ENCODE measurements at regions of chr3 and their contacts with region 1.

Region 1: DNA sequence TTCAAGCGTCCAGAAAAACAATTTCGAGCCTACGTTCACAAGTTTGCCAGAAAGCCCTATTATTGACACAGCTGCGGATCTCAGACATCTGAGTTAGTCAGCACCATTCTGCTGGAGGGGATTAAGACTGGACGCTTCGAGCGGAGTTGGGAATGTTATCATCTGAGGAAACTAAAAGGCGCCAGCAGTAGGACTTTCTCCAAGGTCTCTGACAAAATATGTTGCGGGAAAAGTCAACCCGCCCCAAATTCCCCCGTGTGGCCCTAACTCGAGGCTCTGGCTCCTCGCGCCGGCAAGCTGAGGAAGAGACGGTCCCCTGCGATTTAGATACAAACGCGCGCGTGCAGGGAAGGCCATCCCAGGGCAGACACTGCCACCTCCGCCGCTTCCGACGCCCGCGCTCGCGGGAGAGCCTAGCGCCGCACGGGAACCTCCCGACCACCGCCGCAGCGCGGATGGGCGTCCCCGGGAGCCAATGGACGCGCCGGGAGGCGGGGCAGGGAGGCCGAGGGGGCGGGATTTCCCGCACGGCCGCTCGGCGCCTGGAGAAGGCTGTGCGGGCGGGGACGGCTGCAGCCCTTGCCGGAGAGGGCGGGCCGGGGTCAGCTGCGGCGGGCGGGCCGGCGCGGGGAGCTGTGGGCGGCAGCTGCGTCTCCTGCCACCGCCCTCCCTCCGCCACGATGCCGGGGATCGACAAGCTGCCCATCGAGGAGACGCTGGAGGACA is at the start of gene APPL1:
- DNase-seq: peak; percentile 95
- ATAC-seq: peak; percentile 97
- H3K4me3 Mint-ChIP-seq: peak within 1 kb of the TSS; percentile 94
- H3K27ac Mint-ChIP-seq: peak within 1 kb of the TSS; percentile 87
- H3K4me1 Mint-ChIP-seq: peaks cover 45% of the 10 kb centered on the region
- H3K27me3 Mint-ChIP-seq: no peaks in the 10 kb centered on the region
- CTCF ChIP-seq: no peak
- total RNA-seq, gene APPL1: 58.3 and 62.0 TPM in 2 replicates

Region 2: GRCh38 chr3:56556908-56557830 is 670.2 kb before region 1 on chr3 and contains the start of gene CCDC66:
- CTCF ChIA-PET with region 1: no interaction called
- POLR2A ChIA-PET with region 1: interaction called, 3 read pairs
- intact Hi-C with region 1: loop called (anchors 5 kb)
- DNase-seq: peak; percentile 84
- ATAC-seq: peak; percentile 98
- H3K4me3 Mint-ChIP-seq: peak within 1 kb of the TSS; percentile 98
- H3K27ac Mint-ChIP-seq: peak within 1 kb of the TSS; percentile 97
- H3K4me1 Mint-ChIP-seq: peaks cover 20% of the 10 kb centered on the region
- H3K27me3 Mint-ChIP-seq: no peaks in the 10 kb centered on the region
- CTCF ChIP-seq: no peak
- total RNA-seq, gene CCDC66: 29.1 and 34.9 TPM in 2 replicates

Region 3: GRCh38 chr3:56997675-56998074 is 229.7 kb before region 1 on chr3:
- CTCF ChIA-PET with region 1: interaction called, 3 read pairs
- POLR2A ChIA-PET with region 1: no interaction called
- intact Hi-C with region 1: loop called (anchors 5 kb)
- DNase-seq: no peak
- ATAC-seq: no peak
- H3K4me3 Mint-ChIP-seq: no peak overlapping the region
- H3K27ac Mint-ChIP-seq: no peak overlapping the region
- H3K4me1 Mint-ChIP-seq: peaks cover 6% of the 10 kb centered on the region
- H3K27me3 Mint-ChIP-seq: peaks cover 3% of the 10 kb centered on the region
- CTCF ChIP-seq: no peak

Region 4: GRCh38 chr3:57169872-57170623 is 57.3 kb before region 1 on chr3:
- CTCF ChIA-PET with region 1: interaction called, 6 read pairs
- POLR2A ChIA-PET with region 1: no interaction called
- intact Hi-C with region 1: loop called (anchors 5 kb)
- DNase-seq: peak; percentile 67
- ATAC-seq: peak; percentile 66
- H3K4me3 Mint-ChIP-seq: peak overlapping the region; percentile 74
- H3K27ac Mint-ChIP-seq: no peak overlapping the region
- H3K4me1 Mint-ChIP-seq: peaks cover 11% of the 10 kb centered on the region
- H3K27me3 Mint-ChIP-seq: peaks cover 28% of the 10 kb centered on the region
- CTCF ChIP-seq: peak; percentile 81

Region 5: DNA sequence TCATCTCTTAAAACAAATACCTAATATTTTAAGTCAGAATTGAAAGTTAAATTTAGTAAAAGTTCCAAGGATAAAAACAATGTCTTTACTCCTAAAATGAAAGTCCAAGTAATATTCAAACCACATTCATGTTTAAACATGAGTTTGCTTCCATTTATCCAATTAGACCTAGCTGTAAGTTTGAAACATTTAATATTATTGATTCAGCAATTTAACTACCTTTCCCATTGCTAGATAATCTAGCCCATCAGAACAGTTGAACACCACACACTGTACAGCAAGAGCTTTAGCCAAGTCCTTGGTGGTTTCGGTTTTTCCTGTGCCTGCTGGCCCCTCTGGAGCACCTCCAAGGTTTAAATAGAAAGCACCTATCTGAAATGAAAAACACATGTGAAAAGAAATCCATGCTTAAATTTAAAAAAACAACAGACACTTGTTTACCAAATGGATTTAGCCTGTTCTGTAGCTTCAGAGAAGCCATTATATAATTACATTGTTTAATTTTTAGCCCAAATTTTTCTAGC is 219.0 kb after region 1 on chr3:
- CTCF ChIA-PET with region 1: no interaction called
- POLR2A ChIA-PET with region 1: no interaction called
- intact Hi-C with region 1: no loop called
- DNase-seq: no peak
- ATAC-seq: no peak
- H3K4me3 Mint-ChIP-seq: no peak overlapping the region
- H3K27ac Mint-ChIP-seq: no peak overlapping the region
- H3K4me1 Mint-ChIP-seq: no peaks in the 10 kb centered on the region
- H3K27me3 Mint-ChIP-seq: no peaks in the 10 kb centered on the region
- CTCF ChIP-seq: no peak

Region 6: DNA sequence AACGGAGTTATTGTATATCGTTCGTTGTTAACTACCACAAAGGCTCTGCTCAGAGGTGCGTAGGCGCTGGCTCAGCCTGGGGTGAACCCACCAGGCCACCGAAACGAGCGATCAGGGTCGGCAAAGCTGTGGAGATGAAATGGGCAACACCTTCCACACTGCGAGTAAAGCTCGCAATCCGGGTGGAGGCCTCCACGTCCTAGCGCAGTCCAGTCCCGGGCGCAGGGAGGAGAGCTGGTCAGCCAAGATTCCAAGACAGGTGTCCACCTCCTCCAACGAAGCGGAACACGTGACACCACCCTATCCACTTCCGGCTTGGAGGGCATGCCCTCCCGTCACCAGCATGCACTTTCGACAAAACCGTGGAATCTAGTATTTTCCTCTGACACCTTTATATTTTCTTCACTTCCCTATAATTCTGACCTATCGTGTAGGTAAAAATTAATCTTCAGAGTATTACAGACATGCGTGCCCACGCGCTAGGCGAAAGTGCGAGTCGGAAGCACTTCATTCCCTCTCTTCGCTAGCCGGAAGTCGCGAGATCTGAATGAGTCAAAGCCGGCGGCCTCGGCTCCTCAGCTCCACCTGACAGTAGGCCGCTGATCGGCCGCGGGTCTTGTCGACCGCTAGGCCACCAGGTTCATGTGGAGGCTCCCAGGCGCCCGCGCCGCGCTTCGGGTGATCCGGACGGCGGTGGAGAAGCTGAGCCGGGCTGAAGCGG is 328.5 kb after region 1 on chr3 and contains the start of gene PDE12:
- CTCF ChIA-PET with region 1: no interaction called
- POLR2A ChIA-PET with region 1: interaction called, 5 read pairs
- intact Hi-C with region 1: loop called (anchors 1 kb)
- DNase-seq: peak; percentile 77
- ATAC-seq: peak; percentile 79
- H3K4me3 Mint-ChIP-seq: peak within 1 kb of the TSS; percentile 87
- H3K27ac Mint-ChIP-seq: peak within 1 kb of the TSS; percentile 99
- H3K4me1 Mint-ChIP-seq: peaks cover 41% of the 10 kb centered on the region
- H3K27me3 Mint-ChIP-seq: no peaks in the 10 kb centered on the region
- CTCF ChIP-seq: no peak
- total RNA-seq, gene PDE12: 23.7 and 24.8 TPM in 2 replicates